CD8-positive, alpha-beta T cell (primary cell): ENCODE measurements at regions of chr7 and their contacts with region 1.

Region 1: GRCh38 chr7:67302113-67303039 is 305.7 kb downstream of the TYW1 start:
- DNase-seq: peak; percentile 93 to 99 (median 97)
- ATAC-seq: peak; percentile 77
- H3K4me3 ChIP-seq: peak overlapping the region; percentile 81 to 99
- H3K4me3 Mint-ChIP-seq: peak overlapping the region; percentile 97
- H3K27ac ChIP-seq: peak overlapping the region; percentile 92 to 93
- H3K27ac Mint-ChIP-seq: peak overlapping the region; percentile 99
- H3K4me1 ChIP-seq: no peaks in the 10 kb centered on the region
- H3K4me1 Mint-ChIP-seq: peaks cover 27% of the 10 kb centered on the region
- H3K27me3 ChIP-seq: no peaks in the 10 kb centered on the region
- H3K27me3 Mint-ChIP-seq: no peaks in the 10 kb centered on the region
- CTCF ChIP-seq: no peak

Region 2: GRCh38 chr7:65981965-65982792 is 1320.2 kb before region 1 on chr7 and contains the start of gene GUSB:
- CTCF ChIA-PET with region 1: no interaction called
- POLR2A ChIA-PET with region 1: no interaction called
- intact Hi-C with region 1: loop called in 1 of 2 experiments (anchors 10 kb)
- DNase-seq: peak; percentile 80 to 93 (median 90)
- ATAC-seq: peak; percentile 87
- H3K4me3 ChIP-seq: peak within 1 kb of the TSS; percentile 83 to 90
- H3K4me3 Mint-ChIP-seq: peak within 1 kb of the TSS; percentile 85
- H3K27ac ChIP-seq: peak within 1 kb of the TSS; percentile 69 to 73
- H3K27ac Mint-ChIP-seq: peak within 1 kb of the TSS; percentile 88
- H3K4me1 ChIP-seq: peaks cover 18% of the 10 kb centered on the region
- H3K4me1 Mint-ChIP-seq: peaks cover 14% of the 10 kb centered on the region
- H3K27me3 ChIP-seq: no peaks in the 10 kb centered on the region
- H3K27me3 Mint-ChIP-seq: no peaks in the 10 kb centered on the region
- CTCF ChIP-seq: no peak
- total RNA-seq, gene GUSB: 37.0 to 41.8 TPM

Region 3: GRCh38 chr7:66204822-66205740 is 1097.3 kb before region 1 on chr7 and contains the start of gene TPST1:
- CTCF ChIA-PET with region 1: no interaction called
- POLR2A ChIA-PET with region 1: no interaction called
- intact Hi-C with region 1: loop called in 1 of 2 experiments (anchors 10 kb)
- DNase-seq: peak; percentile 61 to 90 (median 75)
- ATAC-seq: peak; percentile 89
- H3K4me3 ChIP-seq: peak within 1 kb of the TSS; percentile 59 to 84
- H3K4me3 Mint-ChIP-seq: peak within 1 kb of the TSS; percentile 89
- H3K27ac ChIP-seq: peak within 1 kb of the TSS in 1 of 2 experiments; percentile 54
- H3K27ac Mint-ChIP-seq: peak within 1 kb of the TSS; percentile 66
- H3K4me1 ChIP-seq: peaks cover 35% of the 10 kb centered on the region
- H3K4me1 Mint-ChIP-seq: peaks cover 42% of the 10 kb centered on the region
- H3K27me3 ChIP-seq: peaks cover 0 to 3% of the 10 kb centered on the region in 2 experiments
- H3K27me3 Mint-ChIP-seq: peaks cover 6% of the 10 kb centered on the region
- CTCF ChIP-seq: peak; percentile 48
- total RNA-seq, gene TPST1: 4.3 to 6.6 TPM

Region 4: GRCh38 chr7:66413379-66414114 is 888.8 kb before region 1 on chr7:
- CTCF ChIA-PET with region 1: no interaction called
- POLR2A ChIA-PET with region 1: no interaction called
- intact Hi-C with region 1: loop called in 1 of 2 experiments (anchors 10 kb)
- DNase-seq: peak; percentile 62 to 91 (median 85)
- ATAC-seq: peak; percentile 86
- H3K4me3 ChIP-seq: peak overlapping the region; percentile 56 to 62
- H3K4me3 Mint-ChIP-seq: peak overlapping the region; percentile 80
- H3K27ac ChIP-seq: peak overlapping the region; percentile 39 to 43
- H3K27ac Mint-ChIP-seq: peak overlapping the region; percentile 87
- H3K4me1 ChIP-seq: peaks cover 15% of the 10 kb centered on the region
- H3K4me1 Mint-ChIP-seq: peaks cover 12% of the 10 kb centered on the region
- H3K27me3 ChIP-seq: no peaks in the 10 kb centered on the region
- H3K27me3 Mint-ChIP-seq: no peaks in the 10 kb centered on the region
- CTCF ChIP-seq: peak; percentile 50

Region 5: DNA sequence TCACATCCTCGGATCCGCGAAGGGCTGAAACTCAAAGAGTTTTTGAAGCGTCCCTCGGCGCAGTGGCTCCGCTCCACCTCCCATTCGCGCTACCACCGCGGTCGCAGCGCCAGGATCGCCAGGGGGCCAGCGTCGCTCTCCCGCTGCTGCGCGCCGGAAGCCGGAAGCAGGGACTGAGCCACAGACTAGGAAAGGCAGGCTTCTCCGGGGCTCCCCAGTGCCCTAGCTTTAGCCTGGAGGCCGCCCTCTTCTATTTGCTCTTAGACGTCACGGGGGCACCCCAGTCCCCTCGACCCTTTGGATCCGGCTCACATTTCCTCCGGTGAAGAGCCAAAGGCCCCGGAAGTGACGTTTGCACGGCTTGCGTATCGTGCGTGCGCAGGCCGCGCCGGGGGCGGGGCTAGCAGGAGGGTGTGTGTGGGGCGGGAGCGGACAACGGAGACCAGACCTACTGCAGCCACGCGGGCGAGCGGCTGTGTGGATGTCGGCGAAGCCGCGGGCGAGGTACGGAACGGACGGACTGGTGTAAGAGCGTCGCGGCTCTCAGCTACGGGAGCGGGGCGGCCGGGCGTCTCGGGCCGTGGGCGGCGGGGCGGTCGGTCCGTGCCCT is 648.1 kb before region 1 on chr7:
- CTCF ChIA-PET with region 1: no interaction called
- POLR2A ChIA-PET with region 1: no interaction called
- intact Hi-C with region 1: loop called in 1 of 2 experiments (anchors 5 kb)
- DNase-seq: peak; percentile 94 to 99 (median 98)
- ATAC-seq: peak; percentile 91
- H3K4me3 ChIP-seq: peak overlapping the region; percentile 64 to 86
- H3K4me3 Mint-ChIP-seq: peak overlapping the region; percentile 99
- H3K27ac ChIP-seq: peak overlapping the region; percentile 92 to 98
- H3K27ac Mint-ChIP-seq: peak overlapping the region; percentile 99
- H3K4me1 ChIP-seq: peaks cover 7% of the 10 kb centered on the region
- H3K4me1 Mint-ChIP-seq: peaks cover 24% of the 10 kb centered on the region
- H3K27me3 ChIP-seq: no peaks in the 10 kb centered on the region
- H3K27me3 Mint-ChIP-seq: no peaks in the 10 kb centered on the region
- CTCF ChIP-seq: no peak

Region 6: DNA sequence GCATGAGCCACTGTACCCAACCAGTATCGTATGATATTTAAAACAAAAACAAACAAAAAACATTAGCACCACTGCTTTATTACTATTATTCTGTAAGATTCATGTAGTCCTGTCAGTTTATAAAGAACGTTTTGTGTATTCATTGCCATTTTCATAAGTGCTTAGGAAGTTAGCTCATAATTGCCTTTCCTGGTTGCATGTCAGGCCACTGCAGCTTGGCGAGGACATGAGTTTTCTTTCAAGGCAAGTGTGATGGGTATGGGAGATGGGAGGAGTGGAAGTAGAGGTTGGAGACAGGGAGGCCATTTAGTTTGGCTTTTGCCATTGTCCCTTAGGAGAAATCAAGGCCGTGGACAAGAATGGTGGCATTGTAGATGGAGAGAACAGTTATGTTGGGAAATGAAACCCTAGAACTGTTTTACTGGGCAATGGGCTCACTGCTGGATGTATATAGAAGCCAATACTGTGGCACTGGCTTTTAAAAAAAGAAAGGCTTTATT is 256.8 kb before region 1 on chr7:
- CTCF ChIA-PET with region 1: interaction called, 4 read pairs
- POLR2A ChIA-PET with region 1: no interaction called
- intact Hi-C with region 1: loop called (anchors 10 kb)
- DNase-seq: no peak
- ATAC-seq: no peak
- H3K4me3 ChIP-seq: no peak overlapping the region
- H3K4me3 Mint-ChIP-seq: no peak overlapping the region
- H3K27ac ChIP-seq: no peak overlapping the region
- H3K27ac Mint-ChIP-seq: no peak overlapping the region
- H3K4me1 ChIP-seq: no peaks in the 10 kb centered on the region
- H3K4me1 Mint-ChIP-seq: peaks cover 10% of the 10 kb centered on the region
- H3K27me3 ChIP-seq: no peaks in the 10 kb centered on the region
- H3K27me3 Mint-ChIP-seq: no peaks in the 10 kb centered on the region
- CTCF ChIP-seq: no peak